Heart right ventricle (tissue), 16 donors: ENCODE measurements at regions of chr11 and their contacts with region 1.

Region 1: GRCh38 chr11:2699531-2700414 is at the start of gene KCNQ1OT1:
- DNase-seq: peak; percentile 88 to 90
- ATAC-seq: peak; percentile 92 to 97 (median 96)
- H3K4me3 ChIP-seq: peak within 1 kb of the TSS; percentile 50 to 83 (median 76)
- H3K27ac ChIP-seq: peak within 1 kb of the TSS; percentile 67 to 96 (median 94)
- H3K4me1 ChIP-seq: peaks cover 0 to 42% (median 18%) of the 10 kb centered on the region in 9 donors
- H3K27me3 ChIP-seq: no peaks in the 10 kb centered on the region
- CTCF ChIP-seq: peak in 1 of 9 donors; percentile 10
- total RNA-seq, gene KCNQ1OT1: 0.28 to 0.56 (median 0.43) TPM

Region 2: DNA sequence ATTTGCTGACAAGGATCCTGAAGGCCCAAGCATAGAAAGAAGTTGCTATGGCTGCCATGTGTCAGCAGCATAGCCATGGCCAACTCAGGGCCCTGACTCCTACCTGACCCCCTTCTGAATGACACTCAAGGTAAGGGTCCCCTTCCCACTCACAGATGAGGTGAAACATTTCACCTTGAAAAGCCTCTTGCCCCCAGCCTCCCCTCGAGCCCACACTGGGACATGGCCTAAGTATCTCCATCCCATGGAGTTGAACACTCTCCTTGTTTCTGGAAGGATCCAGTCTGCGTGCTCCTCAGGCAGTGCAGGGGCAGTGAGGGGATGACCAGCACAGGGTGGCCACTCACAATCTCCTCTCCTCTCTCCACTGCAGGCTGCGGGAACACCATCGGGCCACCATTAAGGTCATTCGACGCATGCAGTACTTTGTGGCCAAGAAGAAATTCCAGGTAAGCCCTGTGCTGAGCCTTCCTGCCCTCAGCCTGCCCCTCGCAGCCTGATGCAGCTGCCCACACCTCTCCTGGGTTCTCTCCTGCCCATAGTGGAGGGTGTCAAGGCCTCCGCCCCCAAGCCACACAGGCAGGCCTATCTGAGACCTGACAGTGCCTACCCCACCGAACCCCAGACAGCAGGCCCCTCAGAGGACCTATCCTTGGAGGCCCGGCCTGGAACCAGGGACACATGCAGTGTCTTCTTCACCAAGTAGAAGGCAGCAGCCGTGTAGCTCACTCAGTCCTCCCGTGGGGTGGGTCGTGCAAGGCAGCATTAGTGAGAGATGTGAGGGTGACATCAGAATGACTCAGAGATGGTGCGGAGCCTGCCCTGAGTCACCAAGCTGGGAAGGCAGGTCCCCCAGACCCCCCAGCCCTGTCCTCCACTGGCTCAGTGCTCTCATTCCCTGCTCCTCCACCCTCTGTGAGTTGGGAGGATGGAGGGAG is 69.0 kb after region 1 on chr11:
- intact Hi-C with region 1: loop called in 1 of 10 experiments (anchors 10 kb)
- DNase-seq: peak in 1 of 2 donors; percentile 1
- ATAC-seq: peak in 2 of 8 donors; percentile 6 to 15
- H3K4me3 ChIP-seq: no peak overlapping the region
- H3K27ac ChIP-seq: no peak overlapping the region
- H3K4me1 ChIP-seq: peaks cover 0 to 8% (median 0%) of the 10 kb centered on the region in 9 donors
- H3K27me3 ChIP-seq: no peaks in the 10 kb centered on the region
- CTCF ChIP-seq: no peak

Region 3: GRCh38 chr11:2870460-2870859 is 170.7 kb after region 1 on chr11:
- intact Hi-C with region 1: loop called in 1 of 10 experiments (anchors 10 kb)
- DNase-seq: no peak
- ATAC-seq: peak in 1 of 8 donors; percentile 7
- H3K4me3 ChIP-seq: no peak overlapping the region
- H3K27ac ChIP-seq: no peak overlapping the region
- H3K4me1 ChIP-seq: peaks cover 0 to 28% (median 10%) of the 10 kb centered on the region in 9 donors
- H3K27me3 ChIP-seq: peaks cover 5 to 56% (median 33%) of the 10 kb centered on the region in 7 donors
- CTCF ChIP-seq: no peak